Left colon (tissue), 2 donors: ENCODE measurements at regions of chr7 and their contacts with region 1.

Region 1: GRCh38 chr7:28853834-28854749 is 104.0 kb downstream of the TRIL start:
- DNase-seq: peak; percentile 54 to 85
- ATAC-seq: peak; percentile 99

Region 2: GRCh38 chr7:27767374-27767773 is 1086.7 kb before region 1 on chr7:
- intact Hi-C with region 1: no loop called
- DNase-seq: no peak
- ATAC-seq: no peak

Region 3: GRCh38 chr7:28298870-28299518 is 555.1 kb before region 1 on chr7:
- intact Hi-C with region 1: loop called in 1 of 2 experiments (anchors 10 kb)
- DNase-seq: peak in 1 of 2 donors; percentile 7
- ATAC-seq: peak; percentile 47

Region 4: GRCh38 chr7:28389504-28390395 is 464.3 kb before region 1 on chr7:
- intact Hi-C with region 1: loop called in 1 of 2 experiments (anchors 2 kb)
- DNase-seq: no peak
- ATAC-seq: no peak

Region 5: DNA sequence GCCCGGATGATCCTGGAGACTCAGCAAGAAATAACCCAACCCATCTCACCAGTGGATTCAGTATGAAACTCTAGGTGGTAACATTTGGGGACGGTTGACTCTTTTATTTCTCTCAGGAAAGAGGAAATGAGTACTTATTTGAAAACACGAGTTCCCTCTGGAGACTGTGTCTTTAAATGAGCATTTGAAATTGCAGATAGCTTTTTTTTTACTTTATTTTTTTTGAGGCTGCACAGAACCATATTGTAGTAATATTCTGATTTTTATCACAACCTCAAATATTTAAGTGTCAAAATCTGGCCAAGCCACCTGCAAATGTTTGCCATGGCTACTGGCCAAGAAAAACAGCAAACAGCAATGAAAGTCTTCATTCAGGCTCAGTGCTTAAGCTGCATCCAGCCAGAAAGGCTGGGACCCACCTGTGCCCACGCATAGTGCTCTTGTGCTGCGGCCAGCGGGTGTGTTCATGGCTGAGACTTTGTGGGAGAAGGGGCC is 281.0 kb before region 1 on chr7:
- intact Hi-C with region 1: no loop called
- DNase-seq: peak; percentile 23 to 27
- ATAC-seq: peak; percentile 70

Region 6: DNA sequence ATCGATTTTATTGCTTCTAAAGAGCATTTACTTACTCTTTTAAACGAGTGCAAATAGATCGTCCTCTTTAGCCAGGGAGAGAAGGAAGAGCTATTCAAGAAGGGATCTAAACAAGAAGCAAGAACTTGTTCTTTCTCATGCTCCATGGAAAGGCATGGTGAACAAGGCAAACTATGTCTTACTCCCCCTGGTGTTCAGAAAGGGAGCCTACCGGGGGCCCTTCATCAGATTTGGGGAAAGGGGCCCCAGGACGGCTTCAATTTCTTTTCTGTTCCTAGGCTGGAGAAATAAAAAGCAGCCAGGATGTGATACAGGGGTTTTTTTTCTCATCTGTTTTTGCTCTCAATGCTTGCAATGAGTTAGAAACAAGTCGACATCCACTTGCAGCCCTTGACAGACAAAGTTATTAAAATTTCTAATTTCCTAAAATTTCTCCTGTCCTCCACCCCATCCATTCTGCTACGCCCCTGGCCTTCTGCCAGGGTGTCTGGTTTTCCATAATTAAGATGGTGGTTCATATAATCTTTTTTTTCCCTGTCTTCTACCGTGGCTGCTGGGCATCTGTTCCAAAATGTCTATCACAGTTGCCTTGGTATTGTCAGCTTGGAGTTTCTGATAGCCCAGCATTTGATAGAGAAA is 227.3 kb before region 1 on chr7:
- intact Hi-C with region 1: loop called in 1 of 2 experiments (anchors 10 kb)
- DNase-seq: peak in 1 of 2 donors; percentile 16
- ATAC-seq: peak; percentile 33